Activated CD8-positive, alpha-beta T cell treated with anti-CD3 and anti-CD28 coated beads for 36 hours (primary cell): ENCODE measurements at regions of chr2 and their contacts with region 1.

Region 1: GRCh38 chr2:43984533-43984932 is 11.3 kb downstream of the LRPPRC start:
- DNase-seq: no peak
- ATAC-seq: no peak
- H3K4me3 Mint-ChIP-seq: no peak overlapping the region
- H3K27ac Mint-ChIP-seq: no peak overlapping the region
- H3K4me1 Mint-ChIP-seq: peaks cover 40% of the 10 kb centered on the region
- H3K27me3 Mint-ChIP-seq: no peaks in the 10 kb centered on the region
- CTCF ChIP-seq: no peak

Region 2: GRCh38 chr2:43950383-43951008 is 34.0 kb before region 1 on chr2:
- CTCF ChIA-PET with region 1: no interaction called
- POLR2A ChIA-PET with region 1: no interaction called
- intact Hi-C with region 1: no loop called
- DNase-seq: peak; percentile 4
- ATAC-seq: no peak
- H3K4me3 Mint-ChIP-seq: no peak overlapping the region
- H3K27ac Mint-ChIP-seq: no peak overlapping the region
- H3K4me1 Mint-ChIP-seq: no peaks in the 10 kb centered on the region
- H3K27me3 Mint-ChIP-seq: no peaks in the 10 kb centered on the region
- CTCF ChIP-seq: peak; percentile 39

Region 3: DNA sequence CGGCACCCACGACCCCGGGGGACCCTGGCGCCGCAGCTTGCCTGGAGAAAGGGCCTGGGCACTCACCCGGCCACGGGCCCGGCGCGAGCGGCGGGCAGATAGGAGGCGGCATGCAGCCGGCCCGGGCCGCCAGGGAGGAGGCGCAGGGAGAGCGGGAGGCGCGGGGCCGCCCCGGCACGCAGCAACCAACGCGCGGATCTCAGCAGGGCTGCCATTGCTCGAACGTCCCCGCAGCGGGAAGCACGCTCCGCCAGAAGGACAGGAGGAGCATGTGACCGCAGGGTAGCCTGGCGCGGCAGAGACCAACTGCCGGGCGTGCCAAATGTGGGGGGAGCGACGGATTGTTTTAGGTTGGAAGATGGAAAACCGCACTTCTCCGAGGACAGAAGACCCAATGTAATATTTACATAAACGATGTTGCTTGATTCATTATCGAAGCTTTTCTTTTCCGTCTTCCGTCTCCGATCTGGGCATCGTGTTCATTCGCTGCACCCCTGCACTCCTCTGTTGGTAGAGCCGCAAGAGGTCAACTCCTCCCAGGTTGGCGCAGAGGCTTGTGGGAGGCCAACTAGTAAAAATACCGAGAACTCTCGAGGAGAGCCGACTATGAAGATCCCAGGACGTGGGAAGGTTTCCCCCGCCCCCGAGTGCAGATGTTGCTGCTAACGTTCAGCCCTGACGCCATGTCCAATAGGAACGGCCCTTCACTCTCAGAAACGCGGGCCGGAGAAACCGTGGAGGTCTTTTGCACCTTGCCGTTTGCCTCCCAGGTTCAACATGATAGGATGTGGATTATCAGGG is 11.4 kb after region 1 on chr2 and contains the start of gene LRPPRC:
- CTCF ChIA-PET with region 1: no interaction called
- POLR2A ChIA-PET with region 1: interaction called, 14 read pairs
- intact Hi-C with region 1: no loop called
- DNase-seq: peak; percentile 97
- ATAC-seq: peak; percentile 97
- H3K4me3 Mint-ChIP-seq: peak within 1 kb of the TSS; percentile 90
- H3K27ac Mint-ChIP-seq: peak within 1 kb of the TSS; percentile 100
- H3K4me1 Mint-ChIP-seq: peaks cover 37% of the 10 kb centered on the region
- H3K27me3 Mint-ChIP-seq: no peaks in the 10 kb centered on the region
- CTCF ChIP-seq: no peak
- total RNA-seq, gene LRPPRC: 207 to 225 TPM

Region 4: GRCh38 chr2:44051593-44052347 is 67.2 kb after region 1 on chr2:
- CTCF ChIA-PET with region 1: no interaction called
- POLR2A ChIA-PET with region 1: no interaction called
- intact Hi-C with region 1: no loop called
- DNase-seq: no peak
- ATAC-seq: no peak
- H3K4me3 Mint-ChIP-seq: no peak overlapping the region
- H3K27ac Mint-ChIP-seq: no peak overlapping the region
- H3K4me1 Mint-ChIP-seq: no peaks in the 10 kb centered on the region
- H3K27me3 Mint-ChIP-seq: peaks cover 2% of the 10 kb centered on the region
- CTCF ChIP-seq: no peak

Region 5: DNA sequence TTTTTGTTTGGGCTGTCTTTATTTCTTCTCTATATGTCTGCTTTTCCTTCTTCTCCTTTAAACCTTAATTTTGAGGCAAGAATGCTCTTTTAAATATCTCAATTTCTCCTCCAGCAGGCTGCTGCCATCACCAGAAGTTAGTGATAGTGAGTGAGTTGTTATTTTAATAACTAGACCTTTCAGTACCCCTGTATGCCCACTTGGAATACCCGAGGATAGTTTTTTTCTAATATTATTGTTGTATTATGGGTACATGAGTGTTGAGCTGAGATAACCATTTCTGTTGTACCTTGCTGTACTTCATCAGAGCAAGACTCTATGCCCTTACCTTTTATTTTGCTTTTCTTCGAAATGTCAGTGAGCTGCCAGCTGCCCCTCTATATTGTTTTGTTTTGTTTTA is 234.2 kb after region 1 on chr2:
- CTCF ChIA-PET with region 1: no interaction called
- POLR2A ChIA-PET with region 1: no interaction called
- intact Hi-C with region 1: no loop called
- DNase-seq: no peak
- ATAC-seq: no peak
- H3K4me3 Mint-ChIP-seq: no peak overlapping the region
- H3K27ac Mint-ChIP-seq: no peak overlapping the region
- H3K4me1 Mint-ChIP-seq: peaks cover 17% of the 10 kb centered on the region
- H3K27me3 Mint-ChIP-seq: no peaks in the 10 kb centered on the region
- CTCF ChIP-seq: no peak